ENCODE measurements at regions of chr13 and their contacts with region 1.

Region 1: GRCh38 chr13:103663996-103664395 is 597.8 kb upstream of the SLC10A2 start:
- DNase-seq: no peak
- H3K4me3 Mint-ChIP-seq: no peak overlapping the region
- H3K27ac Mint-ChIP-seq: no peak overlapping the region
- H3K4me1 Mint-ChIP-seq: no peaks in the 10 kb centered on the region
- H3K27me3 Mint-ChIP-seq: no peaks in the 10 kb centered on the region
- CTCF ChIP-seq: no peak

Region 2: DNA sequence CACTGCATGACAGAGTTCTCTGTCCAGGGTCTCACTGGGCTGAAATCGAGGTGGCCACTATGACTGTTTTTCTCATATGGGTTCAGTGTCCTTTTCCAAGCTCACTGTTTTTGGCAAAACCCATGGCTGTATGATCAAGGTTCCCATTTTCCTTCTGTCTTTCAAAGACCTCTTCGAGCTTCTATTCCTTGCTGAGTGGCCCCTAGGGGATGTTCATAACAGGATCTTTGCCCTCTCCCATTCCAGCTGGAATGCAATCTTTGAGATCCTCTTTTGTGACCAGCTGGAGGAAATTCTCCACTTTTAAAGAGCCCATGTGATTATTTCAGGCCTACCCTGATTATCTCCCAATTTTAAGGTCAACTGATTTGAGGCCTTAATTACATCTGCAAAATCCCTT is 25.3 kb before region 1 on chr13:
- CTCF ChIA-PET with region 1: no interaction called
- intact Hi-C with region 1: loop called (anchors 2 kb)
- DNase-seq: no peak
- H3K4me3 Mint-ChIP-seq: no peak overlapping the region
- H3K27ac Mint-ChIP-seq: no peak overlapping the region
- H3K4me1 Mint-ChIP-seq: no peaks in the 10 kb centered on the region
- H3K27me3 Mint-ChIP-seq: no peaks in the 10 kb centered on the region
- CTCF ChIP-seq: no peak